RWPE1 (cell line): ENCODE measurements at regions of chr2 and their contacts with region 1.

Region 1: DNA sequence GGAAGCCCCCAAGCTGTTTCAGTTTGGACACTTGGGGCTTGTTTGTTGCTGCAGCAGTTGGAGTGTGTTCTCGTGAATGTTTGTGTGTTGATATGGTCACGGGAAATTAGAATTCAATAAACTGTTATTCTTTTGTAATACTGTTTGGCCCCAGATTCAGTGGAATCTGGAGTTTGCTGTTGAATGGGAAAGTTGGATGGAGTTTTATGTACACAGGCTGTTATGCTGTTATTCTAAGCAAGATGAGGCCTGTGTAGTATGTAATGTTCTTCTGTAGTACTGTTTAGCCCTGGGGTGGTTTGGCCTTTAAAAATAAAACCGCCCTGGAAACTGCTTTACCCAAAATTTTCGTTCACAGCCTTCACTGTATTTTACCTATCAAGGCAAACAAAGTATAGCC is 810.4 kb upstream of the HS6ST1 start:
- DNase-seq: no peak
- H3K27ac ChIP-seq: no peak overlapping the region
- CTCF ChIP-seq: no peak

Region 2: DNA sequence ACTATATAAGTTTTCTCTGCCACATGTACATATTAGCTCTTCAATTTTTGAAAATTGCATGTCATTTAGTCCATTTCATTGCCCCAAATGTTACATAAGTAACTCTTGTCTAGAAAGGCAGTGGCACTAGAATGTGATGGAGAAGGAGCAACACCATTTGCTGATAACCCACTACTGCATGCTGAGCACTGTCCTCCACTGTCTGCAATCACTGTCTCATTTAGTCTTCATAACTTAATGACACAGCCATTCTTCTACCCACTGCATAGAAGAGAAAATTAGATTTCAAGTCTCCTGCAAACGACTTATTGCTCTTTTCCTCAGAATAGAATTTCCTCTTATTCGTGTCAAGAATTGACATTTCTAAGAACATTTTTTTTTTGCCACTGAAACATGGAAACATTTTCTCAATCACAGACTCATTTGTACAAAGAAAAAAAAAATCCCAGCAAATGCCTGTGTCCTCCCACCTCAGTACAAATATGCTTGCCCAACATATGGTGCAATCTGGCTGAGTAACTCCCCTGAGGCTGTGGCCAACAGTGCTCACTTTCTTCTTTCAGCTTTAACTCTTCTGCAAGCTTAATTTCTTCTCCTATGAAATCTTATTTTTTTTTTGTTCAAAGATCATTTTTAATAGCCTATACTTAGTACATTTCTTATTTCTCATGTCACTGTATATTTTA is 41.8 kb before region 1 on chr2:
- CTCF ChIA-PET with region 1: no interaction called
- POLR2A ChIA-PET with region 1: interaction called, 14 read pairs
- DNase-seq: peak; percentile 83
- H3K27ac ChIP-seq: peak overlapping the region; percentile 79
- CTCF ChIP-seq: no peak

Region 3: DNA sequence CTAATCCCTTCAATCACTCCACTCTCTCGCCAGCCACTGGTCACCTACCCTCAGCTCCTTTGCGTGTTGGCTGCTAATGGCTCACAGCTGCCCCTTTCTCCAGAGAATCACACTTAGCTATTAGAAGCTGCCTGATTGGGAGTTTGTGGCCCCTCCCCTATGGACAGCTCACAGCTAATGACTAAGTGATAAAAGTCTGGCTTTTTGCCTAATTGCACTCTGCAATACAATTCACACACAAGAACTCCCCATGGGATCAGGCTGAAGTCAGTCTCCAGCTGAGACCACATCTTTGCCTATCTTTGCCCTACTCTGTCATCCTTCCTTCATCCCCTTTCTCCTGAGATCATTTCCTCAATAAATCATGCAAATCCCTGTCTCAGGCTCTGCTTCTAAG is 148.5 kb after region 1 on chr2:
- CTCF ChIA-PET with region 1: no interaction called
- POLR2A ChIA-PET with region 1: no interaction called
- DNase-seq: peak; percentile 24
- H3K27ac ChIP-seq: no peak overlapping the region
- CTCF ChIP-seq: no peak